Endothelial cell of umbilical vein (primary cell): ENCODE measurements at regions of chr14 and their contacts with region 1.

Region 1: DNA sequence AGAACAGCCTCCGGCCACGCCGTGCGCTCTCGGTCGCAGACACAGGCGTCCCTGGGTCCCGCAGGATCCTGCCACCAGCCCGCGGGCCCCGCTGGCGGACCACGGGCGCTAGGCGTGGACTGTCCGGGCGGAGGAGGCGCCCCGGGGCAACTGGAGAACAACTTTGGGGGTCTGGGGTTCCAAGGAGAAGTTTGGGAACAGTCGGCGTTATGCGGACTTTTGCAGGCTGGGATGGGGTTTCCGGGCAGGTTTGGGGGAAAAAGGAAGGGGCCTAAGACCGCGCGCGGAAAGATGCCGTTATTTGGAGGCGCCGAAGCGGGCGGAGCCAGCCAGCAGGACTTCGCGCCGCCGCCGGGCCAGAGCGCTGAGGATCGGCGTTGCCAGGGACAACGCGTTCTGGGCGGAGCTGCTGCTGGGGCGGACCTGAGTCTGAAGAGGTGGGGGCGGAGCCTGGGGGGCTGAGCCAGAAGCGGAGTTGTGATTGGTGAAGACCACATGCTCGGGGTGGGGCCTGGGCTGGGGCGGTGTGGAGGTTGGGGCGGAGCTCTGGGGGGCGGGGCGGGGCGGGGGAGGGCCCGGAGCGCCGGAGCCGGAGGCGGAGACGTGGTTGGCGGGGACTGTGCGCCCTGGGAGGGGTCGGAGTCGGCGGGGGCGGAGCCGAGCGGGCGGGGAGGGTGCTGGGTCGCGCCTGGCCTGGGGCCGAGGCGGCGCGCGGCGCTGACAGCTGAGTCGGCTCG is at the start of gene CYP46A1:
- DNase-seq: peak; percentile 99
- H3K4me3 ChIP-seq: peak within 1 kb of the TSS; percentile 56 to 94 (median 74)
- H3K27ac ChIP-seq: peak within 1 kb of the TSS; percentile 74
- H3K4me1 ChIP-seq: peaks cover 8% of the 10 kb centered on the region
- H3K27me3 ChIP-seq: peaks cover 5 to 11% of the 10 kb centered on the region in 2 experiments
- CTCF ChIP-seq: no peak
- POLR2A ChIP-seq: peak; percentile 16
- total RNA-seq, gene CYP46A1: 0.14 and 0.24 TPM in 2 replicates

Region 2: DNA sequence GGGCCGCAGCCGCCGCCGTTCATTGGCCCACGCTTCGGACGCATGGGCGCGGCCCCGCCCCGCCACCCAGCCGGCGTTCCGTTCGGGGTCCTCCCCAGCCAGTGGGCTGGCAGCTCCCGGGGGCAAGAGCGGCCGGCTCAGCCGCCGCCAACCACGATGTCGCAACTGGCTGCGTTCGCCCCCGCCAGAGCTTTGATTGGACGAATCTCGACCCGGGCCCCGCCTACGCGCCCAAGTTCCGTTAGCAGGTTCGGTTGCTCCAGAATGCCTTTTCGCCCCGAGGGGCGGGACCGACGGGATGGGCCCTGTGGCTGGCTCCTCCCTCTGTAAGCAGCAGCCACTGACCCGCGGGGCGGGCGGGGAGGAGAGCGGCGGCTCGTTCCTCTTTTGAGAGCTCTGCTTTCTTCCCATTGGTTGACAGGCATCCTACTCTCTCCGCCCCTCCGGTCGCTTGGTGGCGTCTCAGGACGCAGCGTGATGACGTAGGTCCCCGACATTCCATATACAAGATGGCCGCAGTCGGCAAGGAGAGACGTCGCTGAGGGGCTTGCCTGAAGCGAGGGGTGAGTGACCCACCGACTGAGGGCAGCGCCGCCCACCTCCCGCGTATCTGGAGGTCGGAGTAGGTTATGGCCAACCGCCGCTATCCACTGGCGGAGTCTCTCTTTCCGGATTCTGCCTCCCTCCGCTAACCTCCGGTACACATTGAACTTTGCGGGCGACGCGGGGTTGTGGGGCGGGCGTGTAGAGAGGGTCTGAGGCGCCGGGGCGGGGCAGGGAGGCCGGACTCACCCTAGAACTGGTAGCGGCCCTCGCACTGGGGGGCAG is 202.7 kb before region 1 on chr14 and contains the start of gene CCNK:
- CTCF ChIA-PET with region 1: no interaction called
- POLR2A ChIA-PET with region 1: no interaction called
- dilution Hi-C with region 1: no loop called
- intact Hi-C with region 1: loop called (anchors 1 kb)
- DNase-seq: peak; percentile 100
- H3K4me3 ChIP-seq: peak within 1 kb of the TSS; percentile 76 to 99 (median 86)
- H3K27ac ChIP-seq: peak within 1 kb of the TSS; percentile 66
- H3K4me1 ChIP-seq: peaks cover 23% of the 10 kb centered on the region
- H3K27me3 ChIP-seq: no peaks in the 10 kb centered on the region
- CTCF ChIP-seq: no peak
- POLR2A ChIP-seq: peak; percentile 79
- total RNA-seq, gene CCNK: 59.3 and 59.6 TPM in 2 replicates

Region 3: GRCh38 chr14:99502989-99503421 is 180.8 kb before region 1 on chr14:
- CTCF ChIA-PET with region 1: no interaction called
- POLR2A ChIA-PET with region 1: no interaction called
- dilution Hi-C with region 1: no loop called
- intact Hi-C with region 1: no loop called
- DNase-seq: no peak
- H3K4me3 ChIP-seq: no peak overlapping the region
- H3K27ac ChIP-seq: no peak overlapping the region
- H3K4me1 ChIP-seq: peaks cover 22% of the 10 kb centered on the region
- H3K27me3 ChIP-seq: no peaks in the 10 kb centered on the region
- CTCF ChIP-seq: no peak
- POLR2A ChIP-seq: no peak

Region 4: GRCh38 chr14:99698642-99699041 is 14.9 kb after region 1 on chr14:
- CTCF ChIA-PET with region 1: interaction called, 14 read pairs
- POLR2A ChIA-PET with region 1: no interaction called
- dilution Hi-C with region 1: no loop called
- intact Hi-C with region 1: no loop called
- DNase-seq: no peak
- H3K4me3 ChIP-seq: no peak overlapping the region
- H3K27ac ChIP-seq: no peak overlapping the region
- H3K4me1 ChIP-seq: no peaks in the 10 kb centered on the region
- H3K27me3 ChIP-seq: peaks cover 6 to 13% of the 10 kb centered on the region in 2 experiments
- CTCF ChIP-seq: no peak
- POLR2A ChIP-seq: no peak

Region 5: DNA sequence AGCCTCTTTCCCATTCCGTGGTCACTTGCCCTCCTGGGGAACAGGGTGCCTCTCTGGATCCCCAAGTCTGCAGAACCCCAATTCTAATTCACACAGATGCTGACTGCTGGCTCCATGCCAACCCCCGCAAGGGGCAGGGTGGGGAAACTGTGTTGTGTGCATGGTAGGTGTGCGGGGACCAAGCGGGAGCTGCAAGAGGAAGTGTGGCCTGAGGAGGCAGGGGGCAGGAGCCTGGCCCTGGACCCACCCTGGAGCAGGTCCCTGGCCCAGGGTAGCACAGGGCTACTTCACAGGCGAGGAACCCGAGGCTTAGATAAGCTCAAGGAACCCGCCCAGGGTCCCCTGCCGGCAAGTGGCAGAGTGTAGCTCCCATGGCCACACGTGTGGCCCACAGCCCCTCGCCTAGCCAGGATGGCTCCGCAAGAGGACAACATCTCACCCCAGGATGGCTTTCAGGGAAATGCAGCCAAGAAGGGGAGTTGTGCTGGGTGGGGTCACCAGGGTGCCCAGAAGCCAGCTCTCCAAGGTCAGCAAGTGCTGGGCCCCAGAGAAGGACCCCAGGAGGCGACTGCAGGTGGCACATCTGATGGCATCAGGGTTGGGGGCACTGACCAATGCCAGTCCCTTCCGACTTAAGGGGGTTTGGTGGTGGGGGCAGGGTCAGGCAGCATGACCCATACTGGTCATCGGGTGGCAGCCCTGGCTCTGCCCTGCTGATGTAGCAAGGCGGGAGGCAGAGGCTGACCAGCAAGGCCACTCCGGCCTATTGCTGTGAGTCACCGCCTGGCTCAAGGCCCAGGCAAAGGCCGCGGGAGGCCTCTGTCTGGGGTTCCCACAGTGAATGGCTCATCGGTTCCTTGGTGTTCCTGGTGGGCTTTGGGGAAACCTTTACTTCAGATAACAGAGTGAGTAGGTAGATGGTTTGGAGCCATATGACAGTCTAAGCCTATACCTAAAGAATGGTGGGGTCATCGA is 72.1 kb after region 1 on chr14:
- CTCF ChIA-PET with region 1: interaction called, 5 read pairs
- POLR2A ChIA-PET with region 1: no interaction called
- dilution Hi-C with region 1: no loop called
- intact Hi-C with region 1: loop called (anchors 1 kb)
- DNase-seq: peak; percentile 93
- H3K4me3 ChIP-seq: no peak overlapping the region
- H3K27ac ChIP-seq: peak overlapping the region; percentile 83
- H3K4me1 ChIP-seq: peaks cover 81% of the 10 kb centered on the region
- H3K27me3 ChIP-seq: no peaks in the 10 kb centered on the region
- CTCF ChIP-seq: no peak
- POLR2A ChIP-seq: no peak

Region 6: GRCh38 chr14:99884834-99885648 is 201.3 kb after region 1 on chr14:
- CTCF ChIA-PET with region 1: interaction called, 11 read pairs
- POLR2A ChIA-PET with region 1: no interaction called
- dilution Hi-C with region 1: no loop called
- intact Hi-C with region 1: loop called (anchors 1 kb)
- DNase-seq: peak; percentile 70
- H3K4me3 ChIP-seq: no peak overlapping the region
- H3K27ac ChIP-seq: no peak overlapping the region
- H3K4me1 ChIP-seq: no peaks in the 10 kb centered on the region
- H3K27me3 ChIP-seq: no peaks in the 10 kb centered on the region
- CTCF ChIP-seq: peak; percentile 44 to 57
- POLR2A ChIP-seq: no peak

Region 7: GRCh38 chr14:99946652-99947489 is 263.1 kb after region 1 on chr14:
- CTCF ChIA-PET with region 1: interaction called, 20 read pairs
- POLR2A ChIA-PET with region 1: no interaction called
- dilution Hi-C with region 1: no loop called
- intact Hi-C with region 1: loop called (anchors 2 kb)
- DNase-seq: peak; percentile 26
- H3K4me3 ChIP-seq: no peak overlapping the region
- H3K27ac ChIP-seq: no peak overlapping the region
- H3K4me1 ChIP-seq: no peaks in the 10 kb centered on the region
- H3K27me3 ChIP-seq: no peaks in the 10 kb centered on the region
- CTCF ChIP-seq: peak; percentile 87 to 94
- POLR2A ChIP-seq: no peak